Activated CD4-positive, alpha-beta T cell treated with anti-CD3 and anti-CD28 coated beads for 36 hours (primary cell): ENCODE measurements at regions of chr2 and their contacts with region 1.

Region 1: DNA sequence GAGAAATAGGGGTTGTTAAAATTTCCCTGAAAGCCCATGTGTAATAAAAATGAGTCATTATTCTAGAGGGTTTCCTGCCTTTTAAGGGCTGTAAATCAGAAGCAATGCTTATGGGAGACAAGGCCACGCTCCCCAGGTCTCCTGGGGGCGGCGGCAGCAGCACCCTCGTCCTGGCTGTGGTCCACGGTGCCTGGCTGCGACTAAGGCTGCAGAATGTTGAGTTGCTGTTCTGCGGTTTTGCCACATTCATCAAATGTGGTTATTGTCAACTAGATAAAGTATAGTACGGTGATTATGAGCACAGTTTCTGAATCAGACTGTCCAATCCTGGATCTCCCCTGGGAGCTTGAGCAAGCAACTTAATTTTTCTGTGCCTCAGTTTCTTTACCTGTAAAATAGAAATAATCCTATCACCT is 11.9 kb upstream of the AGFG1 start:
- DNase-seq: peak; percentile 86
- ATAC-seq: peak; percentile 37
- H3K4me3 Mint-ChIP-seq: peak overlapping the region; percentile 60
- H3K27ac Mint-ChIP-seq: peak overlapping the region; percentile 85
- H3K4me1 Mint-ChIP-seq: peaks cover 86% of the 10 kb centered on the region
- H3K27me3 Mint-ChIP-seq: no peaks in the 10 kb centered on the region

Region 2: GRCh38 chr2:227308784-227309183 is 151.3 kb before region 1 on chr2:
- CTCF ChIA-PET with region 1: no interaction called
- POLR2A ChIA-PET with region 1: no interaction called
- intact Hi-C with region 1: no loop called
- DNase-seq: no peak
- ATAC-seq: no peak
- H3K4me3 Mint-ChIP-seq: no peak overlapping the region
- H3K27ac Mint-ChIP-seq: no peak overlapping the region
- H3K4me1 Mint-ChIP-seq: no peaks in the 10 kb centered on the region
- H3K27me3 Mint-ChIP-seq: no peaks in the 10 kb centered on the region

Region 3: GRCh38 chr2:227374158-227374557 is 85.9 kb before region 1 on chr2:
- CTCF ChIA-PET with region 1: interaction called, 3 read pairs
- POLR2A ChIA-PET with region 1: interaction called, 3 read pairs
- intact Hi-C with region 1: loop called (anchors 1 kb)
- DNase-seq: peak; percentile 76
- ATAC-seq: peak; percentile 89
- H3K4me3 Mint-ChIP-seq: no peak overlapping the region
- H3K27ac Mint-ChIP-seq: peak overlapping the region; percentile 59
- H3K4me1 Mint-ChIP-seq: peaks cover 26% of the 10 kb centered on the region
- H3K27me3 Mint-ChIP-seq: peaks cover 2% of the 10 kb centered on the region

Region 4: DNA sequence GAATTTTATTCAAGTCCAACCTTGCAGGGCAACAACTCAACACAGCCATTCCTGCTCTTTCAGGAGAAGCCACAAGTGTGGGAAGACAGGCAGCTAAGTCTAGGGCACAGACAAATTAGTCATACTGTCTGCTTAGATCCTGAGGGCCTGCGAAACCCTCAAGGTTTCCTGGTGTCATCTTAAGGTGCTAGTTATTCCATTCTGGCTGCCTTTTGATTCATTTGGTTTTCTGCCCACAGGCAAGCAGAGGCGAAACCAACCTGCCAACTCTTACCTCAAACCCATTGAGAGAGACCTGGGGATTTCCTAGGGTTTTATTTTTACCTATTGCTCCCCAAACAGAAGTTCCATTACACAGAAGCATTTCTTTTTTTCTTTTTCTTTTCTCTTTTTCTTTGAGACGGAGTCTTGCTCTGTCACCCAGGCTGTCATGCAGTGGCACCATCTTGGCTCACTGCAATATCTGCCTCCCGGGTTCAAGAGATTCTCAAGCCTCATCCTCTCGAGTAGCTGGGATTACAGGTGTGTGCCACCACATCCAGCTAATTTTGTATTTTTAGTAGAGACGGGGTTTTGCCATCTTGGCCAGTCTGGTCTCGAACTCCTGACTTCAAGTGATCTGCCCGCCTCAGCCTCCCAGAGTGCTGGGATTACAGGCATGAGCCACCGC is 48.6 kb before region 1 on chr2:
- CTCF ChIA-PET with region 1: interaction called, 4 read pairs
- POLR2A ChIA-PET with region 1: interaction called, 4 read pairs
- intact Hi-C with region 1: loop called (anchors 1 kb)
- DNase-seq: peak; percentile 80
- ATAC-seq: peak; percentile 87
- H3K4me3 Mint-ChIP-seq: peak overlapping the region; percentile 12
- H3K27ac Mint-ChIP-seq: peak overlapping the region; percentile 92
- H3K4me1 Mint-ChIP-seq: peaks cover 66% of the 10 kb centered on the region
- H3K27me3 Mint-ChIP-seq: no peaks in the 10 kb centered on the region

Region 5: GRCh38 chr2:227471924-227472264 is 11.8 kb after region 1 on chr2 and contains the start of gene AGFG1:
- CTCF ChIA-PET with region 1: interaction called, 24 read pairs
- POLR2A ChIA-PET with region 1: interaction called, 7 read pairs
- intact Hi-C with region 1: loop called (anchors 1 kb)
- DNase-seq: peak; percentile 91
- ATAC-seq: peak; percentile 82
- H3K4me3 Mint-ChIP-seq: peak within 1 kb of the TSS; percentile 94
- H3K27ac Mint-ChIP-seq: peak within 1 kb of the TSS; percentile 87
- H3K4me1 Mint-ChIP-seq: peaks cover 48% of the 10 kb centered on the region
- H3K27me3 Mint-ChIP-seq: no peaks in the 10 kb centered on the region
- total RNA-seq, gene AGFG1: 158 to 214 TPM